Naive thymus-derived CD4-positive, alpha-beta T cell (primary cell): ENCODE measurements at regions of chr10 and their contacts with region 1.

Region 1: GRCh38 chr10:50624866-50625692 is 1.3 kb upstream of the SGMS1 start:
- DNase-seq: peak in 8 of 9 donors; percentile 48 to 62 (median 58)
- ATAC-seq: peak; percentile 55
- H3K4me3 ChIP-seq: peak overlapping the region; percentile 97
- H3K4me3 Mint-ChIP-seq: peak overlapping the region; percentile 90 to 99 (median 96)
- H3K27ac ChIP-seq: peak overlapping the region; percentile 99
- H3K27ac Mint-ChIP-seq: peak overlapping the region; percentile 94 to 98 (median 95)
- H3K4me1 ChIP-seq: peaks cover 15 to 26% of the 10 kb centered on the region in 2 donors
- H3K4me1 Mint-ChIP-seq: peaks cover 13 to 45% (median 24%) of the 10 kb centered on the region in 7 donors
- H3K27me3 ChIP-seq: no peaks in the 10 kb centered on the region
- H3K27me3 Mint-ChIP-seq: peaks cover 0 to 6% (median 0%) of the 10 kb centered on the region in 5 donors

Region 2: GRCh38 chr10:49538381-49539319 is 1086.4 kb before region 1 on chr10 and contains the start of gene ERCC6:
- CTCF ChIA-PET with region 1: no interaction called
- POLR2A ChIA-PET with region 1: interaction called, 3 read pairs
- intact Hi-C with region 1: loop called (anchors 1 to 2 kb)
- DNase-seq: peak; percentile 89 to 95 (median 93)
- ATAC-seq: peak; percentile 97
- H3K4me3 ChIP-seq: peak within 1 kb of the TSS; percentile 81
- H3K4me3 Mint-ChIP-seq: peak within 1 kb of the TSS; percentile 89 to 98 (median 93)
- H3K27ac ChIP-seq: peak within 1 kb of the TSS; percentile 77
- H3K27ac Mint-ChIP-seq: peak within 1 kb of the TSS; percentile 89 to 98 (median 93)
- H3K4me1 ChIP-seq: peaks cover 10 to 14% of the 10 kb centered on the region in 2 donors
- H3K4me1 Mint-ChIP-seq: peaks cover 32 to 52% (median 45%) of the 10 kb centered on the region in 7 donors
- H3K27me3 ChIP-seq: no peaks in the 10 kb centered on the region
- H3K27me3 Mint-ChIP-seq: peaks cover 2 to 25% (median 16%) of the 10 kb centered on the region in 5 donors
- total RNA-seq, gene ERCC6: 23.0 to 50.7 (median 45.2) TPM

Region 3: DNA sequence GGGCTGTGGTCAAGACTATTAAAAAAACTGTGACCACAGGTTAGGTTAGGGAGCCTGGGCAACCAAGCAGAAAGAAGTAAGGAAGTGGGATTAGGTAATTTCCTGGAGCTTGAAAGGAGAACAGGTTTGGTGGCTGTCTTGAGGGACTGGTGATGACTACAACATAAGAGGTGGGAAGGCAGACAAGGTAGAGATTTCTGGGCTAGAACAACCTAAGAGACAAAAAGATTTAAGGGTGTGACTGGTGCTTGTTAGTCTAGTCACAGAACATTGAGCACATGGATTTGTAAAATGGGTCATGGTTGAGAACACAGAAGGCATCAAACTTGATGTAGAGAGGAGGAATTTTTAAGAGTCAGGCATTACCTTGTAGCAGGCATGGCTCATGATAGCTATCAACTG is 250.0 kb before region 1 on chr10:
- CTCF ChIA-PET with region 1: no interaction called
- POLR2A ChIA-PET with region 1: no interaction called
- intact Hi-C with region 1: no loop called
- DNase-seq: no peak
- ATAC-seq: no peak
- H3K4me3 ChIP-seq: no peak overlapping the region
- H3K4me3 Mint-ChIP-seq: no peak overlapping the region
- H3K27ac ChIP-seq: no peak overlapping the region
- H3K27ac Mint-ChIP-seq: no peak overlapping the region
- H3K4me1 ChIP-seq: peaks cover 0 to 7% of the 10 kb centered on the region in 2 donors
- H3K4me1 Mint-ChIP-seq: peaks cover 4 to 27% (median 14%) of the 10 kb centered on the region in 7 donors
- H3K27me3 ChIP-seq: no peaks in the 10 kb centered on the region
- H3K27me3 Mint-ChIP-seq: no peaks in the 10 kb centered on the region

Region 4: DNA sequence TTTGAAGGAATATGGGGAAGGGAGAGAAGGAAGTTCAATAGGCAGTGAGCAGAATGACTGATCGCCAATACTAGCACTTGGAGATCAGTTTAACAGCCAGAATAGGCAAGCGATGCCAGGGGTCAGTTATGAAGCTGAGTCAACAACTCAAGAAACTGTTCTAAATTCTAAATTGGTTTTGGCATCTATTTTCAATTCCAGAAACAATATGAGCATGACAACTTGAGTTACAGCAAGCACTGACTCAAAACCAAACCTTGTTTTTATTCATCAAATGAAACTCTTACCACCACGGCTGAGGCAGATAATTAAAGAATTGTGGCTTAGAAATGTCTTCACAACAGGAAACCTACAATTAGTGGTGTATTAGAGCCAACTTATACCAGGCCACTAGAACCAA is 193.3 kb before region 1 on chr10:
- CTCF ChIA-PET with region 1: no interaction called
- POLR2A ChIA-PET with region 1: no interaction called
- intact Hi-C with region 1: loop called in 1 of 2 experiments (anchors 5 kb)
- DNase-seq: no peak
- ATAC-seq: no peak
- H3K4me3 ChIP-seq: no peak overlapping the region
- H3K4me3 Mint-ChIP-seq: peak overlapping the region in 3 of 10 donors; percentile 9 to 26 (median 17)
- H3K27ac ChIP-seq: no peak overlapping the region
- H3K27ac Mint-ChIP-seq: peak overlapping the region in 2 of 9 donors; percentile 15 to 34
- H3K4me1 ChIP-seq: peaks cover 0 to 13% of the 10 kb centered on the region in 2 donors
- H3K4me1 Mint-ChIP-seq: peaks cover 14 to 33% (median 24%) of the 10 kb centered on the region in 7 donors
- H3K27me3 ChIP-seq: no peaks in the 10 kb centered on the region
- H3K27me3 Mint-ChIP-seq: no peaks in the 10 kb centered on the region

Region 5: GRCh38 chr10:50554995-50555568 is 70.0 kb before region 1 on chr10:
- CTCF ChIA-PET with region 1: interaction called, 9 read pairs
- POLR2A ChIA-PET with region 1: interaction called, 5 read pairs
- intact Hi-C with region 1: loop called in 1 of 2 experiments (anchors 5 kb)
- DNase-seq: peak in 3 of 9 donors; percentile 8 to 12 (median 9)
- ATAC-seq: no peak
- H3K4me3 ChIP-seq: no peak overlapping the region
- H3K4me3 Mint-ChIP-seq: no peak overlapping the region
- H3K27ac ChIP-seq: no peak overlapping the region
- H3K27ac Mint-ChIP-seq: no peak overlapping the region
- H3K4me1 ChIP-seq: no peaks in the 10 kb centered on the region
- H3K4me1 Mint-ChIP-seq: peaks cover 0 to 72% (median 46%) of the 10 kb centered on the region in 7 donors
- H3K27me3 ChIP-seq: no peaks in the 10 kb centered on the region
- H3K27me3 Mint-ChIP-seq: no peaks in the 10 kb centered on the region

Region 6: GRCh38 chr10:50585921-50586739 is 38.9 kb before region 1 on chr10:
- CTCF ChIA-PET with region 1: no interaction called
- POLR2A ChIA-PET with region 1: interaction called, 4 read pairs
- intact Hi-C with region 1: loop called in 1 of 2 experiments (anchors 5 kb)
- DNase-seq: no peak
- ATAC-seq: no peak
- H3K4me3 ChIP-seq: no peak overlapping the region
- H3K4me3 Mint-ChIP-seq: peak overlapping the region in 1 of 10 donors; percentile 13
- H3K27ac ChIP-seq: no peak overlapping the region
- H3K27ac Mint-ChIP-seq: no peak overlapping the region
- H3K4me1 ChIP-seq: peaks cover 0 to 4% of the 10 kb centered on the region in 2 donors
- H3K4me1 Mint-ChIP-seq: peaks cover 0 to 60% (median 36%) of the 10 kb centered on the region in 7 donors
- H3K27me3 ChIP-seq: no peaks in the 10 kb centered on the region
- H3K27me3 Mint-ChIP-seq: no peaks in the 10 kb centered on the region

Region 7: DNA sequence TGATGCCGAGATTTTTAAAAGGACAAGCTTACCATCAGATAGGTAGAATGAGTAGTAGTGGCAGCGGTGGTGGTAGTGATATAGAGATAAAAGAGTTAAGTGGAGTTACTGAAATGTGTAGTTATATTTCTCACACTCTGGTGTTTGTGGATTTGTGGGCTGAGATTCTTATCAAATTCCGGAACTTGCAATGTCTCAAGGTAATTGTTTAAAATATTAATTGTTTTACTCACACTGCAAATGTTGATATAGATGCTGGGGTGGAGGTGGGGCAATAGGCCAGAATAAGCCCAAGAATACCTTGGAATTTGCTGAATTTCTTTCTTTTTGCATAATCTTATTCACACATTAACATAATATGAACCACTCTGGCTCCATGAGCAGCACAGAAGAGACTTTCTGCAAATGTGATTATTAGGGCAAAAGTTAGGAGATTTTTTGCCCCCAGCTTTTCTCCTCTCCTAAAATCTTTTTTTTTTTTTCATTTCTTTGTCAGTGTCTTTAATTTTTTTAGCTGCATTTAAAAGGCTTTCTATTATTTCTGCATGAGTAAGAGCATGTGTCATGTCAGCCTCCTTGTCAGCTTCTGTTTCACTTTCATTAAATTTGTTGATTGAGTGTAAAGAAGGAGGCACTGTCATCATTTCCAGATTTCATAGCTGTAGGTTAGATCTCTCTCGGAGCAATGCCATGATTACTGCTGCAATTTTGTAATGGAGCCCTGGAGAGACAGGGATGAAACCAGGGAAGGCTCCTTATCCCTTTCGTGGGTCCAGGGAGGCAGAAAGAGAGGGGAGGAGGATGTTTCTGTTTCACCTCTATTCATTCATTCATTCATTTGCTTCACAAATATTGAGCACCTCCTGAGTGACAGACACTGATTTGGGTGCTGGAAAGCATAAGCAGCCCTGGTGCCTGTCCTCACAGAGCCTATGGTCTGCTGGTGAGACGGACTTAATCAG is 11.8 kb after region 1 on chr10:
- CTCF ChIA-PET with region 1: interaction called, 5 read pairs
- POLR2A ChIA-PET with region 1: interaction called, 27 read pairs
- intact Hi-C with region 1: loop called (anchors 1 kb)
- DNase-seq: peak in 3 of 9 donors; percentile 19 to 34 (median 29)
- ATAC-seq: peak; percentile 84
- H3K4me3 ChIP-seq: peak overlapping the region; percentile 41
- H3K4me3 Mint-ChIP-seq: peak overlapping the region; percentile 52 to 78 (median 72)
- H3K27ac ChIP-seq: peak overlapping the region; percentile 11
- H3K27ac Mint-ChIP-seq: peak overlapping the region; percentile 20 to 73 (median 55)
- H3K4me1 ChIP-seq: peaks cover 24 to 27% of the 10 kb centered on the region in 2 donors
- H3K4me1 Mint-ChIP-seq: peaks cover 22 to 39% (median 35%) of the 10 kb centered on the region in 7 donors
- H3K27me3 ChIP-seq: no peaks in the 10 kb centered on the region
- H3K27me3 Mint-ChIP-seq: peaks cover 0 to 56% (median 0%) of the 10 kb centered on the region in 5 donors